Adrenal gland (tissue), 19 donors: ENCODE measurements at regions of chr9 and their contacts with region 1.

Region 1: DNA sequence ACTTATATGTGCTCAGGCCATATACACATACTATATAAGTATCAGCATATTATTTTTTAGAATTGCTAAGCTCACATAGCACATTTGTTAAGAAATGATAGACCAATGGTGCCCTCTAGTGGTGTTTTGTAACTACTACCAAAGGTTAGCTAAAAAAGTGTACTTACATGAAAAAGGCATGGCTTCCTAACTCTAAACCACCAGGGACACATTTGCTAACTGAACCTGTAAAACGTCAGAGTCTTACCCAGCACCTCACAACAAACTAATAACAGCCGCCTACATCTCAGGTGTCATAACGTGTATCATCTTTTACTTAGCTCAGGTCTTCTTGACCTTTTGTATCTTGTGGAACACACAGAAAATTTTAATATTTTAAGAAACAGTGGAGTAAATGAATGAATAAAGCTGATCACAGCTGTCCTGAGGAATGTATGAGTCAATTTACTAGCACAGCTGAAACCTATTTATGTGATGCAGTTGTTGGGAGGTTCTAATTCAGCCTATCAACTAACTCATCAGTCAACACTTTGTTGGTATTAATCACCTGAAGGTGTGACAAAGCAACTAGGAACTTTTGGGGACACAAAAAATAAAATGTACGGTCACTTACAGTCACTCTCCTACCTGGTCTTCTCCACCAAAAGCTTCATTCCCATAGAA is 72.9 kb downstream of the BAAT start:
- DNase-seq: peak in 3 of 7 donors; percentile 12 to 32 (median 22)
- H3K4me3 ChIP-seq: no peak overlapping the region
- H3K27ac ChIP-seq: no peak overlapping the region
- H3K4me1 ChIP-seq: no peaks in the 10 kb centered on the region
- H3K27me3 ChIP-seq: no peaks in the 10 kb centered on the region
- CTCF ChIP-seq: peak; percentile 68 to 76 (median 73)
- POLR2A ChIP-seq: no peak

Region 2: DNA sequence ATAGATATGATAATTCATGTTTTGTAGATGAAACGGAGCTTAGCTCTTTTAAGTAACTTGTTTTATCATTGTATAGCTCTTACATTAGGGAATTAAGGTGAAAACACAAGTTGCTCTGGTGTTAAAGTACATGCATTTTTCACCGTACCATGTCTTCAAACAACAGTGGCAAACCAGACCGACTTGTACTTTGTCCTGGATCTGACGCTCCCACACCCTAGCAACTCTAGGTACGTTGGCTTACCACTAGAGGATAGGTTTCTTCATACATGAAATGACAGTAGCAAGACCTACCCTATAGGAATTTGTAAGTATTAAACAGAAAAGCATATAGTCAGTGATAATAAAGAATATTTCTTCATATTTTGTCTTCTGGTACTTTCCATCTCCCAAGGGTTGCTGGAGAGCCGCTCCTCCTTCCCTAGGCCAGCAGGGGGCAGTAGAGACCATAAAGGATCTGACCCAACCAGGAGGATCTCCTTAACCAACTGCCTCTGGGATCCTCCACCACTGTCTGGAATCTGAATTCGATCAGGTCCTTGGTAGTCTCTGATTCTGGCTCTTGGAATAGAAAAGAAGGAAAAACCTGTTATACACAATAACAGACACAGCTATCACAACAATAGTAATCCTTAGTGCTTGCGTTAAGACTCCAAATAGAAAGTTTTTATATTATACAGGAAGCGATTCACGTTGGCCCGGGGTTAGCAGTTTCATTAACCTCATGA is 597.4 kb before region 1 on chr9:
- intact Hi-C with region 1: loop called in 1 of 2 experiments (anchors 5 kb)
- DNase-seq: peak; percentile 45 to 83 (median 66)
- H3K4me3 ChIP-seq: no peak overlapping the region
- H3K27ac ChIP-seq: no peak overlapping the region
- H3K4me1 ChIP-seq: no peaks in the 10 kb centered on the region
- H3K27me3 ChIP-seq: peaks cover 3% of the 10 kb centered on the region
- CTCF ChIP-seq: peak; percentile 59 to 79 (median 65)
- POLR2A ChIP-seq: no peak

Region 3: DNA sequence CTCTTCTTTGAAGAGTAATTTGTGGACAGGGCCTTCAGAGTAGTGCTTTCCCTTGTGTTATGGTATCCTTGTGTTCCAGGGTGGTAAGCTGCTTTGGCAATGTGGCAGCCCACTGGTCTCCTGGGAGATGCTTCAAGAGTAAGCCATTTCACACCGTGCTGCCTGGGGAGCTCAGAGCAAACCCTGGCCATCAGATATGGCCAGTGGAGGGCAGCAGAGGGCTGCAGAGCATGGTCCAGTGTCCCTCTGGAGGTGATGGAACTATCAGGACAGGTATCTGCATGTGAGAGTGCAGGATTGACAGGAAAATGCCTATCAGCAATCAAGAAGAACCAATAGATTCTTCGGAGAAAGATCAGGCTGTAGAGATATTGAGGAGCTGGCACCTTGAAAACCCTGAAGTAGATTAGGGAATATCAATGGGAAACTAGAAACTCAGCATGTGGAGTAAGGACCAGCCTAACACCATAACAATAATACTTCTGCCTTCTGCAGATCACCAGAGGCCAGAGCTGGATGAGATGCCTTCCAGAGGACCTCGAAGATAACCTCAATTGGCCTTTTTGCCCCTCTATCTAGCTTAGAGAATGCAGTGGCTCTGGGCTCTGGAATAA is 192.6 kb before region 1 on chr9:
- intact Hi-C with region 1: loop called in 1 of 2 experiments (anchors 5 kb)
- DNase-seq: peak; percentile 30 to 78 (median 62)
- H3K4me3 ChIP-seq: no peak overlapping the region
- H3K27ac ChIP-seq: no peak overlapping the region
- H3K4me1 ChIP-seq: peaks cover 0 to 4% of the 10 kb centered on the region in 2 donors
- H3K27me3 ChIP-seq: peaks cover 4% of the 10 kb centered on the region
- CTCF ChIP-seq: peak; percentile 66 to 76 (median 72)
- POLR2A ChIP-seq: no peak